Pancreas (tissue), 10 donors: ENCODE measurements at regions of chr11 and their contacts with region 1.

Region 1: DNA sequence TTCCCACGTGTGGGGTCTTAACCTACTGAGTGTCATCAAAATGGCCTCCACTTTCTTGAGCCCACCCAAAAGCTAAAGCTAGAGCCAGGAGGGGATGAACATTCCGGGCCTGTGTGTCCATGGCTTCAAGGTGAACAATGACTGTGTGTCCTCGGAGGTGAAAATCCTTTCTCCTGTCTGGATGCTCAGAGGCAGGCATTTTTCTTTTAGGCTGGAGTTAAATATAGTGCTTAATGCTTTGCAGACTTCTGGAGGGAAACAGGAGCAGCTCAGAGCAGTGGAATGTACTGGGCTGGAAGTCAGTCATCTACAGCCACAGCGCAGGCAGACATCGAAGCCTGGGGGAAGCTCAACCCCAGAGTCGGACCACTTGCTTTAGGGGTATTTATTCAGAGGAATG is 68.6 kb upstream of the TMEM45B start:
- DNase-seq: no peak
- ATAC-seq: no peak
- H3K4me3 ChIP-seq: no peak overlapping the region
- H3K27ac ChIP-seq: no peak overlapping the region
- H3K4me1 ChIP-seq: peaks cover 0 to 3% (median 0%) of the 10 kb centered on the region in 3 donors
- H3K27me3 ChIP-seq: no peaks in the 10 kb centered on the region
- CTCF ChIP-seq: no peak

Region 2: GRCh38 chr11:129368889-129369672 is 378.0 kb before region 1 on chr11:
- intact Hi-C with region 1: loop called in 1 of 3 experiments (anchors 5 kb)
- DNase-seq: peak in 1 of 6 donors; percentile 32
- ATAC-seq: peak; percentile 33 to 57 (median 49)
- H3K4me3 ChIP-seq: no peak overlapping the region
- H3K27ac ChIP-seq: peak overlapping the region in 2 of 4 donors; percentile 47 to 67
- H3K4me1 ChIP-seq: peaks cover 0 to 7% (median 0%) of the 10 kb centered on the region in 3 donors
- H3K27me3 ChIP-seq: peaks cover 0 to 7% (median 2%) of the 10 kb centered on the region in 4 donors
- CTCF ChIP-seq: no peak

Region 3: GRCh38 chr11:129817534-129818051 is 70.5 kb after region 1 on chr11:
- intact Hi-C with region 1: no loop called
- DNase-seq: no peak
- ATAC-seq: no peak
- H3K4me3 ChIP-seq: no peak overlapping the region
- H3K27ac ChIP-seq: no peak overlapping the region
- H3K4me1 ChIP-seq: no peaks in the 10 kb centered on the region
- H3K27me3 ChIP-seq: no peaks in the 10 kb centered on the region
- CTCF ChIP-seq: no peak